ENCODE measurements at regions of chr2 and their contacts with region 1.

Region 1: GRCh38 chr2:2874341-2874740 is 503.3 kb downstream of the EIPR1 start:
- DNase-seq: no peak
- ATAC-seq: no peak
- H3K4me3 ChIP-seq: no peak overlapping the region
- H3K27ac ChIP-seq: no peak overlapping the region
- H3K4me1 ChIP-seq: no peaks in the 10 kb centered on the region
- H3K27me3 ChIP-seq: no peaks in the 10 kb centered on the region
- CTCF ChIP-seq: no peak
- POLR2A ChIP-seq: no peak
- RAD21 ChIP-seq: no peak

Region 2: DNA sequence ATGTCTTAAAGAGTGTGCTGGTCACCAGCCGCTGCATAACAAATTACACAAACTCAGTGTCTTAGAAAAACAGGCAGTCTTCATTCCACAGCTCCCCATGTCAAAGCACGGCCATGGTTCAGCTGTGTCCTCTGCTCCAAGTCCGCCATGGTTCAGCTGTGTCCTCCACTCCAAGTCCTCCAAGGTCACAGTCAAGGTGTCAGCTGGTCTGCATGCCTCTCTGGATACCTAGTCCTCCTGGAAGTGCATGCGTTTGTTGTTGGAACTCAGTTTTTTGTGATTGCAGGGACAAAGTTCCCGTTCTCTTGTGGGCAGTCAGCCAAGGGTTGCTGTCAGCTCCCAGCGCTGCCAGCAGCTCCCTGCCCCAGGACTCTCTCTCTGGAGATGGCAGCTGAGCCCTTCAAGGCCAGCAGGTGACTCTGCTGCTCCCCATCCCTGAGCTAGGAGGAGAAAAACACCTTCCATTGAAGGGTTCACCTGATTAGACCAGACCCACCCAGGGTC is 239.3 kb before region 1 on chr2:
- CTCF ChIA-PET with region 1: no interaction called
- POLR2A ChIA-PET with region 1: interaction called, 11 read pairs
- dilution Hi-C with region 1: no loop called
- in situ Hi-C with region 1: no loop called
- intact Hi-C with region 1: no loop called
- DNase-seq: no peak
- ATAC-seq: no peak
- H3K4me3 ChIP-seq: no peak overlapping the region
- H3K27ac ChIP-seq: no peak overlapping the region
- H3K4me1 ChIP-seq: no peaks in the 10 kb centered on the region
- H3K27me3 ChIP-seq: no peaks in the 10 kb centered on the region
- CTCF ChIP-seq: no peak
- POLR2A ChIP-seq: no peak
- RAD21 ChIP-seq: no peak

Region 3: DNA sequence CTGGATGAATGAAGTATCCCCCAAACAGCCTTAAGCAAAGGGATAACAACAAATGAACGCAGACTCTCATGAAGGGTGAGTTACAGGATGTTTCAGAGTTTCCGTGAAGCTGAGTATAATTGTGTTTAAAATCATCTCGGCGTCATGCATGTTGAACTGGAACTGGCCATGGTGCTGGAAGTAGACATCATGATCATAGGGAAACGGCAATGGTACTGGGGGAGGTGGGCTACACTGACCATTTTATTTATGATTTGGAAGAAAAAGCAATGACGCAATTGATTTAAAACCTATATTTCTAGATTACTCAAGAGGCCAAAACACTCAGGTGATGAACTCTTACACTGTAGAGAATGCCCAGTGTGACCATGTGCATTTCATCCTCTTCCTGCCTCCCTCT is 155.3 kb before region 1 on chr2:
- CTCF ChIA-PET with region 1: no interaction called
- POLR2A ChIA-PET with region 1: no interaction called
- dilution Hi-C with region 1: no loop called
- in situ Hi-C with region 1: no loop called
- intact Hi-C with region 1: no loop called
- DNase-seq: no peak
- ATAC-seq: no peak
- H3K4me3 ChIP-seq: no peak overlapping the region
- H3K27ac ChIP-seq: no peak overlapping the region
- H3K4me1 ChIP-seq: no peaks in the 10 kb centered on the region
- H3K27me3 ChIP-seq: no peaks in the 10 kb centered on the region
- CTCF ChIP-seq: no peak
- POLR2A ChIP-seq: no peak
- RAD21 ChIP-seq: no peak